WTC11 (cell line): ENCODE measurements at regions of chrX and their contacts with region 1.

Region 1: DNA sequence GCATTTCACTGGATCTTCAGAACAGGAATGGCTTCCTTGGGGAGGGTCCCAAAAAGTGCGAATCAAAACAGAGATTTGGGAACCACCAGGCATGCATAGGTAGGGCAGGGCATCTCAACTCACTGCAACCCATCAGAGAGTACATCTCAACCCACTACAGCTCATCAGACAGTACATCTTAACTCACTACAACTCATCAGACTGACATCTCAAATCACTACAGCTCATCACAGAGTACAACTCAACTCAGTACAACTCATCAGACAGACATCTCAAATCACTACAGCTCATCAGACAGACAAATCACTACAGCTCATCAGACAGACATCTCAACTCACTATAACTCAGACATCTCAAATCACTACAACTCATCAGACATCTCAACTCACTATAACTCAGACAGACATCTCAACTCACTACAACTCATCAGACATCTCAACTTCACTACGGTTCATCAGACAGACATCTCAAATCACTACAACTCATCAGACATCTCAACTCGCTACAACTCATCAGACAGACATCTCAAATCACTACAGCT is 47.5 kb upstream of the CLDN34 start:
- DNase-seq: no peak
- ATAC-seq: no peak
- H3K4me3 Mint-ChIP-seq: no peak overlapping the region
- H3K27ac Mint-ChIP-seq: no peak overlapping the region
- H3K4me1 Mint-ChIP-seq: peaks cover 24% of the 10 kb centered on the region
- H3K27me3 Mint-ChIP-seq: no peaks in the 10 kb centered on the region
- CTCF ChIP-seq: no peak

Region 2: GRCh38 chrX:9746148-9746888 is 173.4 kb before region 1 on chrX:
- CTCF ChIA-PET with region 1: no interaction called
- POLR2A ChIA-PET with region 1: interaction called, 14 read pairs
- DNase-seq: no peak
- ATAC-seq: no peak
- H3K4me3 Mint-ChIP-seq: no peak overlapping the region
- H3K27ac Mint-ChIP-seq: peak overlapping the region; percentile 86
- H3K4me1 Mint-ChIP-seq: peaks cover 21% of the 10 kb centered on the region
- H3K27me3 Mint-ChIP-seq: no peaks in the 10 kb centered on the region; the same call in 1 of the 2 replicates
- CTCF ChIP-seq: no peak